Ovary (tissue), 10 donors: ENCODE measurements at regions of chr10 and their contacts with region 1.

Region 1: DNA sequence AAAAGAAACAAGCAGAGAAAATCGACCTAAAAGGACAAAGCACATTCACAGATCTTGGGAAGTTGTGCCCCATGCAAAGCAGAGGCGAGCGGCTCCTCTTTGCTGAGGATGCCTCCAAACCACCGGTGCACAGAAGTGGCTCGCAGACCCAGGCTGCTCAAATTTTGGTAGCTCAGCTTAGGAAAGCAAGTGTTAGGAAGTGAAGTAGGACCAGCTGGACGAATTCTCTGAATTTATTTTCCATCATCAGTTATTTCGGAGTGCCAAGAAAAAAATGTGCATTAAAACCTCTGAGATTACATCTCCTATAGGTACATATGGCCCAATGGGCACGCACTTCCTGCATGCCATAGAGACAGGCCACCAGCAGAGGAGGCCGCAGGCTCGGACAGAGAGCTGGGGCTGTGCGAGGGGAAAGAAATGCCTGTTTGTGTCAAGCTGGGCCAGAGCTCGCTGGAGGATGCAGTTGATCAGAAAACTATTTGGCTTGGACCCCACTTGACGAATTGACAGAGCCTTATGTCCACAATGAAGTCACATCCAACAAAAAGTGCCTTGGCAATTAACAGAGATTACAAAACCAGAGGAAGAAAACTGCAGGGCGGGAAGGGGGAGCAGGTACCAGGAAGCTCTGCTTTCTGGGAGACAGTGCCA is 122.3 kb upstream of the LYZL2 start:
- DNase-seq: peak in 4 of 5 donors; percentile 54 to 80 (median 71)
- H3K4me3 ChIP-seq: no peak overlapping the region
- H3K27ac ChIP-seq: no peak overlapping the region
- H3K4me1 ChIP-seq: peaks cover 2% of the 10 kb centered on the region
- H3K27me3 ChIP-seq: no peaks in the 10 kb centered on the region
- CTCF ChIP-seq: peak in 1 of 3 donors; percentile 30
- EP300 ChIP-seq: no peak
- POLR2A ChIP-seq: no peak

Region 2: GRCh38 chr10:31808258-31809218 is 1056.7 kb after region 1 on chr10:
- intact Hi-C with region 1: loop called in 1 of 4 experiments (anchors 10 kb)
- DNase-seq: peak in 4 of 5 donors; percentile 15 to 29 (median 18)
- H3K4me3 ChIP-seq: peak overlapping the region; percentile 15
- H3K27ac ChIP-seq: peak overlapping the region in 1 of 2 donors; percentile 53
- H3K4me1 ChIP-seq: peaks cover 2% of the 10 kb centered on the region
- H3K27me3 ChIP-seq: no peaks in the 10 kb centered on the region
- CTCF ChIP-seq: peak; percentile 41 to 71 (median 61)
- EP300 ChIP-seq: no peak
- POLR2A ChIP-seq: no peak